ENCODE measurements at regions of chr15 and their contacts with region 1.

Region 1: GRCh38 chr15:20340931-20341661 is 200.5 kb downstream of the GOLGA6L6 start:
- DNase-seq: peak; percentile 69
- CTCF ChIP-seq: no peak

Region 2: DNA sequence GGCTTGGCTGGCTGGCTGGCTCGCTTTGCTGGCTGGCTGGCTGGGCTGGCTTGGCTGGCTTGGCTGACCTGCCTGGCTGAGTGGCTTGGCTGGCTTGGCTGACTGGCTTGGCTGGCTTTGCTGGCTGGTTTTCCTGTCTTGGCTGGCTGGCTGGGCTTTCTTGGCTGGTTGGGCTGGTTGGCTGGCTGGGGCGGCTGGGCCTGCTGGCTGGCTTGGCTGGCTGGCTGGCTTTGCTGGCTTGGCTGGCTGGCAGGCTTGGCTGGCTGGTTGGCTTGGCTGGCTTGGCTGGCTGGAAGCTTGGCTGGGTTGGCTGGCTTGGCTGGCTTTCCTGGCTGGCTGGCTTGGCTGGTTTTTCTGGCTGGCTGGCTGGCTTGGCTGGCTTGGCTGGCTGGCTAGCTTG is 235.1 kb before region 1 on chr15:
- in situ Hi-C with region 1: no loop called
- DNase-seq: no peak
- CTCF ChIP-seq: no peak

Region 3: DNA sequence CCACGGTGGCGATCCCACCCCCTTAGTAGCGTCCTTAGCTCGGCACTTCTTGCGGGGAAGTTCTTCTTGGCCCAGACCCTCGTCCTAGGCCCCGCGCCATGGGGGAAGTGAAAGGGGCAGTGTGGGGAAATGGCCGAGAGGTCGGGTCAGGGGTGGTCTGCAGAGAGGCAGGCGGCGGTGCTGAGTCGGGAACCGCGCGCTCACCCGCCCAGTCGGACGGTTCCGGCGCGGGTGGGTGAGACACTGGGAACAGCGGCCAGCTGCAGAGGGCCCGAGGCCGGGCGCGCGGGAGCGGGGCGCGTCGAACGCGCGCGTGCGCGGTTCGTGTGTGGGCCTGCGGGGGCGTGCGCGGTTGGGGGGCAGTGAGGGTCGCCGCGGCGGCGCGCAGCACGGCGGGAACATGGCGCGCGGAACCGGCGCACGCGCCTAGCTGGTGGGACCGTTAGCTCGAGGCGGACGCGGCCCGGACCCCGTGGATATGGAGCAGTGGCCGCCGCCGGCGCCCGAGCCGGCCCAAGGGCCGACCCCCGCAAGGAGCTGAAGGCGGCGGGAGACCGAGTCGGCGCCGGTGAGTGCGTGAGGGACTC is 46.4 kb before region 1 on chr15:
- in situ Hi-C with region 1: loop called (anchors 10 kb)
- DNase-seq: no peak
- CTCF ChIP-seq: no peak

Region 4: DNA sequence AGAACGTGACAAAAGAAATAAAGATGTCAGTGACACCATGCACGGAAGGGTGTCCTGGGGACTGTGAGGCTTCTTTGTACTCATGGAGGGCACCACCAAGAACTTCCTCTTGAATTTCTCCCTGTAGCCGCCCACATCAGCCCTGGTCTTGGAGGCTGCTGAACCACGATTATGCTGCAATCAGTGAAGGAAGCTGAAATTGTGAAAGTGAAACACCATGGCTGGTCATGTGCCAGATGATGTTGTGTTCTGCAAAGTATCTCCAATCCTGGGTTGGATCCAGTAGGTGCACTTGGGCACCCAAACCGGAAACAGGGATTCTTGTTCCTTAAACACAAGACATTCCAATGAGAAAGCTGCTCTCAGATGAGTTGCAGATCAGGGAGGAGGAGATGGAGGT is 304.9 kb after region 1 on chr15:
- in situ Hi-C with region 1: no loop called
- DNase-seq: no peak
- CTCF ChIP-seq: no peak

Measured in GM13977 (cell line).